ENCODE measurements at regions of chr7 and their contacts with region 1.

Region 1: DNA sequence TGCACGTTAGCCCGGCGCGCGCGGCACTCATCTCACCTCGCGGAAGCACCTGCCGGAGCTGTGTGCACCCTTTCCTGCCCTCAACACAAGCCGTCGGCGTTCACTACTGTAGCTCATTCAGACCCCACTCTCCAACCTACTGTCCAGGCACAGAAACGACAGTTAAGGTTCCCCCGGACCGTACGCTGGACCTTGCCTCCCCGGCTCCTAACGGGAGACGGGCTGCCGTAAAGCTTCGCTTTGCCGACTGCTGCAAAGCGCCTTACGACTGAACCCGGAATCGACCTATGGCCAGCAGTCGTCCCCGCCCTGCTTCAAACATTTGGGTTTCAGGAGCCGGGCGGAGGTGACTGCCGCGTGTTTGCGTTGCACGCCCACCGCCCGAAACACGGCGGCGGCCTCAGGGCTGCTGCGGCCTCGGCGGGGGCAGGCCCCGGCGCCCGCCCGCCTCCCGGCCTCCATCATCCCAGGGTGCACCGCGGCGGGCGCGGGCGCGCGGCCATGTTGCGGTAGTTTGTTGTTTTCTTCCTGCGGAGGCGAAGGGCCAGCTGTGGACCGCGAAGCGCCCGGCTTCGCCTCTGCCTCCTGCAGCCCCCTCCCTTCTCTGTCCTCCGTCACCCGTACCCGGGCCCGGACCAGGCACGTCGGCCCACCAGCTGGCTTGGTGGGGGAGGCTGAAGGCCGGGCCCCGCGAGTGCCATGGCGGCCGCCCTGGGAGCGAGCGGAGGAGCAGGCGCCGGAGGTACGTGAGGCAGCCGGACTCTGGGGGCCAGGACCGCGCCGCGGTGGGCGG is at the start of gene RBM33:
- DNase-seq: peak; percentile 90 to 93
- ATAC-seq: peak; percentile 89 to 93
- H3K4me3 ChIP-seq: peak within 1 kb of the TSS; percentile 95
- H3K27ac ChIP-seq: peak within 1 kb of the TSS; percentile 98
- H3K4me1 ChIP-seq: peaks cover 15% of the 10 kb centered on the region; the same call in 1 of the 3 replicates
- CTCF ChIP-seq: no peak
- EP300 ChIP-seq: no peak
- POLR2A ChIP-seq: peak; percentile 91
- RAD21 ChIP-seq: no peak; a peak in 2 of 5 replicates
- polyA plus RNA-seq, gene RBM33: 19.5 and 21.9 TPM in 2 replicates

Region 2: DNA sequence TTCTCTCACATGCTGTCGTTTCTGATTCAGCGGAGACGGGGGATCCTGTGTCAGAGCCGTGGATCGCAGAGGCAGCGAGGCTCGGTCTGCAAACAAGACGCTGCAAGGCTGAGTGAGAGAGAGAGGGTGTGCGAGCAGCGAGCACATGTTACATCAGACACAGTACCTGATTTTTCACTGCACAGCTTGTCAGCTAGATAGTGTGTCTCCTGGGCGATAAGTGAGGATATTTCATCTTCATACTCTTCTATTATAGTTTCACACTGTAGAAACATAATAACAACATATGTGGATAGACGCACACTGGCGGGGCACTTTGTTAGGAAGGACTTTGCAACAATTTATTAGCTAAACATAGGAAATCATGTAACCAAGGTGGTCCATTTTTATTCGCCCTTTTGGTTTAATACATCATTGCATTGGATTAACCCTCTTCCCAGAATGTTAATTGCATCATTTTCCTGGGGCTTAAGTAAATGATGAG is 137.5 kb before region 1 on chr7:
- CTCF ChIA-PET with region 1: no interaction called
- POLR2A ChIA-PET with region 1: interaction called, 19 read pairs
- DNase-seq: peak in 1 of 2 experiments; percentile 17
- ATAC-seq: peak; percentile 34 to 59; a peak in 2 of 6 replicates
- H3K4me3 ChIP-seq: no peak overlapping the region
- H3K27ac ChIP-seq: no peak overlapping the region
- H3K4me1 ChIP-seq: no peaks in the 10 kb centered on the region
- CTCF ChIP-seq: no peak
- EP300 ChIP-seq: no peak
- POLR2A ChIP-seq: no peak
- RAD21 ChIP-seq: no peak

Region 3: GRCh38 chr7:155665957-155666287 is 21.5 kb after region 1 on chr7:
- CTCF ChIA-PET with region 1: interaction called, 4 read pairs
- POLR2A ChIA-PET with region 1: interaction called, 17 read pairs
- DNase-seq: peak; percentile 32 to 35
- ATAC-seq: peak; percentile 90 to 93
- H3K4me3 ChIP-seq: no peak overlapping the region
- H3K27ac ChIP-seq: peak overlapping the region; percentile 20 to 76; a peak in 4 of 6 replicates
- H3K4me1 ChIP-seq: peaks cover 24% of the 10 kb centered on the region
- CTCF ChIP-seq: no peak
- EP300 ChIP-seq: no peak
- POLR2A ChIP-seq: no peak
- RAD21 ChIP-seq: no peak

Region 4: DNA sequence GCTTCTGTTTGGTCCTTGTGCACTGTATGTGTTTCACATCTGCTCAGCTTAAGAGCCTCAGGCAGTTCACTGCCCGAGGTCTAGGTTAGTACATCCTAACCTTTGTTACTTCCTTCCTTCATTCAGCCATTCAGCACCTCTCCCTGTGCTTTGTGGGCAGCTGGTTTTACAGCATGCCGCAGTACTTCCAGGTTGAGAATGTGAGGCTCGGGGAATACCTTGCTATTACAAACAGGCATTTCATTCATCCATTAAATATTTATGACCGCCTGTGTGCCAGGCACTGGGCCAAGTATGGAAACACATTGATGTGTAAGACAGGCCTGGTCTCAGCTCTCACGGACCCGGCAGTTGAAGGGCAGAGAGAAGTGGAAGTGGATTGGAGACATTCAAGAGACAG is 85.5 kb after region 1 on chr7:
- CTCF ChIA-PET with region 1: no interaction called
- POLR2A ChIA-PET with region 1: no interaction called
- DNase-seq: no peak
- ATAC-seq: no peak
- H3K4me3 ChIP-seq: no peak overlapping the region
- H3K27ac ChIP-seq: no peak overlapping the region
- H3K4me1 ChIP-seq: peaks cover 25% of the 10 kb centered on the region
- CTCF ChIP-seq: no peak
- EP300 ChIP-seq: no peak
- POLR2A ChIP-seq: no peak
- RAD21 ChIP-seq: no peak

Measured in A549 (cell line).